A673 (cell line): ENCODE measurements at regions of chr13 and their contacts with region 1.

Region 1: GRCh38 chr13:51230477-51231105 is 8.4 kb downstream of the FAM124A start:
- DNase-seq: peak; percentile 44
- H3K4me3 ChIP-seq: peak overlapping the region; percentile 11
- H3K27ac ChIP-seq: no peak overlapping the region
- H3K4me1 ChIP-seq: peaks cover 14% of the 10 kb centered on the region
- H3K27me3 ChIP-seq: no peaks in the 10 kb centered on the region
- CTCF ChIP-seq: no peak

Region 2: DNA sequence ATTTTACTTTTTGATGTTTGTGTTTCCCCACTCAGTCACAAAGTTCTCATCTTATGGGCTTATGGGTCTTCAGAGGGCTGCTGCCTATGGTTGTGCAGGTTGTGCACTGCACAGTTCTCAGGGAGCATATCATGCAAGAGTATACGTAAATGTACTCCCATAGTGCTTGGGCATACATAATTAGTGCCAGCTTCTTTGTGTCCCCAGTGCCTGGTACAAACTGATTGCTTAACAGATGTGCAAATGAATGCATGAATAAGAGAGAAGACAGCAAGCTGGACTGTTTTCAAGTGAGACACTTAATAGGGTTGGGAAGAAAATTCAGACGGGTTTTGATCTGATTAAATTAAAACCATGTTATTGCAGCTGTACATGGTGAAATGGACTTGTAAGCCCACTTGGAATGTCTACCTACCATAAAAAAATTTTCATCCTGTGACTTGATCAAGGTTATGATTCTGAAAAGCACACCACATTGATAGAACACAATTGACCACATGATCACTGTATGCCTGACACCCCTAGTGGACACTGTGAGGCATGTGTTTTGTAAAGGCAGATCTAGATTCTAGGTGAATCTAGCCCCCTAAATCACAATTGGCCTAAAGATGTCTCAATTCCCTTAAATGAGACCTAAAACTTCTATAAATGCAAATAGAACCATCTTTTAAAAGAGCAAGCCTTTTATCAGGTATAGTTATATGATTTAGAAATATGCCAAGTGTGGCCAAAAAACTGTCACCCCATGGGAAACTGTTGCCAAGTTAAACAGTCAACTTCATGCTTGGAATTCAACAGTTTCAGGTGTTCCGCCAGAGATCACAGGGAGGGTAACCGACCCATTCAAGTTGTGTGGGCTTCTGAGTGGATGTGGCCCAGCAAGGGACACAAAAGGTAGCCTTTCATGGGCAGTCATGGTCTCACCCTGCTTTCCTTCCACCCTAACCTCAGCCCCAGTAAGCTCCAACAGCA is 19.5 kb after region 1 on chr13:
- CTCF ChIA-PET with region 1: no interaction called
- POLR2A ChIA-PET with region 1: no interaction called
- intact Hi-C with region 1: loop called (anchors 2 kb)
- DNase-seq: no peak
- H3K4me3 ChIP-seq: no peak overlapping the region
- H3K27ac ChIP-seq: no peak overlapping the region
- H3K4me1 ChIP-seq: no peaks in the 10 kb centered on the region
- H3K27me3 ChIP-seq: no peaks in the 10 kb centered on the region
- CTCF ChIP-seq: peak; percentile 60